Sigmoid colon (tissue), 7 donors: ENCODE measurements at regions of chr13 and their contacts with region 1.

Region 1: DNA sequence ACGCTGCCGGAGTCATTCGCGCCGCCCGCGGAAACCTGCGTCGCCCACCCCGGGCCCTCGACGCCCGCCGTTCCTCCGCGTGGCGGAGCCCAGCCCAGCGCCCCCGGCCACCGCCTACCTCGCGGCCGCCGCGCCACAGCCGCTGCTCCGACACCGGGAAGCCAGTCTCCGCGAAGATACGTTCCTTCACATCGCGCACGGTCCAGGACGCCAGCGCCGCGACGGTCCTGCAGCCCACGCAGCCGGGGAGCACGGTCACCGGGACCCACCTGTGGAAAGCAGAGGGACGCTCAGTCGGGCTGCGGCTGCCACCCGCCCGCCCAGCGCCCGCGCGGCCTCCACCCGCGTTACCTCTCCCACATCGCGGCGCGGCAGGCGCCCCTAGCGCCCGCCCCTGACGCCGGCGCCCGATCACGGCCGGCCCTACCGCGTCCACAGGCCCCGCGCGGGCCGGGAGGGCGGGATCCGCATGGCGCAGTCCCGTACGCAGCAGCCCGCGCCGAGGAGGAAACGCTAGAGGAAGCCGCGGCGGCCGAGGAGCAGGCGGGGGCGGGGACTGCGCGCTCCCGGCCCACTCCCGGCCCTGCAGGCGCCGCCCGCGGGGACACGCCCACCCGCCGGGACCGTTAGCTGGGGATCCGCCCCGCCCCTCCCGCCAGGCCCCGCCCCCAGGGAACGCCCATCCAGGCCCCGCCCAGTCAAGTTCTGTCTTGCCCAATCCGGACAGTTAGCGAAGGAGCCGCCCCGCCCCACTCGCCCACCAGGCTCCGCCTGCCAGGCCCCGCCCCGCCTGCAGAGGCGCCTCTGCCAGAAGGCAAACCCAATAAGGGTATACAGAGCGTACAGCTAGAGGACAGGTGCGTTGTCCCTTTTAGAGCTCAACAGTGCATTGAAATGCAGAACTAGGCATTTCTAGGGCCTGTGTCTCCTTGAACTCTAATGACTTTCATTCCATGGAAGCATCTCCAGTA is 58.2 kb downstream of the SACS start:
- DNase-seq: peak; percentile 98
- H3K4me3 ChIP-seq: peak overlapping the region; percentile 67 to 91 (median 78)
- H3K27ac ChIP-seq: peak overlapping the region; percentile 86 to 95 (median 90)
- H3K4me1 ChIP-seq: peaks cover 0 to 53% (median 35%) of the 10 kb centered on the region in 4 donors
- H3K27me3 ChIP-seq: no peaks in the 10 kb centered on the region
- CTCF ChIP-seq: peak in 1 of 4 experiments; percentile 19
- EP300 ChIP-seq: no peak
- POLR2A ChIP-seq: peak in 1 of 2 donors; percentile 23

Region 2: DNA sequence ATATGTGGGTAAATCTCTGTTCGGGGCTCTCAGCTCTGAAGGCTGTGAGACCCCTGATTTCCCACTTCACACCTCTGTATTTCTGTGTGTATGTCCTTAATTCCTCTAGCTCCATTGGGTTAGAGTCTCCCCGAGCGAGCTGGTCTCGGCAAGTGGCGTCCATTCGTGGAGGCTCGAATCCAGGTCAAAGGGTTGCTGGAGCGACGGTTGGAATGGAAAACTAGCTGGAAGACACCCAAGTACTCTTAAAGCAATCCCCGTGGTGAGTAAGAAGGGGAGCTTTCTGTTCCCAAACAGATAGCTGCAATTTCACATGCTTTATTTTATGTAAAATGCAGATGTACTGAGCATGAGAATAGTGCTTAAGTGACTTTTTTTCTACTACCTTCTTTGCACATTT is 472.0 kb before region 1 on chr13:
- intact Hi-C with region 1: no loop called
- DNase-seq: no peak
- H3K4me3 ChIP-seq: no peak overlapping the region
- H3K27ac ChIP-seq: no peak overlapping the region
- H3K4me1 ChIP-seq: no peaks in the 10 kb centered on the region
- H3K27me3 ChIP-seq: no peaks in the 10 kb centered on the region
- CTCF ChIP-seq: no peak
- EP300 ChIP-seq: no peak
- POLR2A ChIP-seq: no peak

Region 3: DNA sequence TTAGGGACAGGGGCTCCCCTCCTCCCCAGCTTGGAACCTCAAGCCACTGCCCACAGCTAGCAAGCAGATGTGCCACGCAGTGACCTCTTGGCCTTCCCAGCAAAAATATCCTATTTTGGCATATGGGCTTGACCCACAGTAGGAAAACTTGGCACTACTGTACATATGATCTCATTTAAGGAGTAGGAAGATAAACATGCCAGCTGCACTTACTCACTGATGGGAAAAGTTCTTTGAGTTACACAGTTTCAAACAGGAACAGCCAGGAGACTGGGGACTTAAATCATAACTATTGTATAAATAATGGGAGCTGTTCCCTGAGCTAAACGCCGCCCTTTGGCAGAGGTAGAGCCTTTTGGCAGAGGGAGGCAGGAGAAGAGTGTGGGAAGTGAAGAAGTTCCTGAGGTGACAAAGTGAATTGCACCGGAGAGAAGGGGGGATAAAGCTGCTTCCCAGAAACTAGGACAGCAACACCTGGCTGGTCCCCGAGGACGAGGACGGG is 52.1 kb after region 1 on chr13:
- intact Hi-C with region 1: loop called (anchors 2 kb)
- DNase-seq: peak; percentile 93
- H3K4me3 ChIP-seq: peak overlapping the region in 2 of 4 donors; percentile 3 to 9
- H3K27ac ChIP-seq: peak overlapping the region; percentile 78 to 88 (median 80)
- H3K4me1 ChIP-seq: peaks cover 0 to 51% (median 29%) of the 10 kb centered on the region in 4 donors
- H3K27me3 ChIP-seq: no peaks in the 10 kb centered on the region
- CTCF ChIP-seq: no peak
- EP300 ChIP-seq: peak in 3 of 4 donors; percentile 76 to 90 (median 86)
- POLR2A ChIP-seq: no peak